Prostate gland (tissue), 2 donors: ENCODE measurements at regions of chr4 and their contacts with region 1.

Region 1: DNA sequence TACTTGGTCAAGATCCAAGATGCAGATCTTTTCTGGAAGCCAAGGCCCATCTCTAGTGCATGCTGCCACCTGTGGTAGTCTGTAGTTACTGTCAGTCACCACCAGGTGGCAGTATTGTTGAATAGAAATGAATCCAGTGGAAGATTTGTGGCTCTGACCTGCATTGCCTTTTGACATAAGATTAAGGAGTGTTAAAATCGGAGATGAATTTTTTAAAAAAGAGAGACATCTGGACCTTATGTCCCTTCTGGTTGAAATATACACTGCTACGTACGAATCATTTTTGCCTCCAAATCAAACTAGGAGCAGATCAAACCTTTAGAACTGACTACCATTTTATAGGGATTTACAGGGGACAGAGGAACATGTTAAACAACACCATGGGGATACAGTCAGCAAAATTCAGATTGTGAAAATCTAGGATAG is 46.9 kb upstream of the RHOH start:
- DNase-seq: peak; percentile 78
- H3K4me3 ChIP-seq: no peak overlapping the region
- H3K27ac ChIP-seq: no peak overlapping the region
- H3K4me1 ChIP-seq: no peaks in the 10 kb centered on the region
- H3K27me3 ChIP-seq: no peaks in the 10 kb centered on the region
- CTCF ChIP-seq: peak; percentile 82 to 98 (median 93)
- POLR2A ChIP-seq: no peak

Region 2: DNA sequence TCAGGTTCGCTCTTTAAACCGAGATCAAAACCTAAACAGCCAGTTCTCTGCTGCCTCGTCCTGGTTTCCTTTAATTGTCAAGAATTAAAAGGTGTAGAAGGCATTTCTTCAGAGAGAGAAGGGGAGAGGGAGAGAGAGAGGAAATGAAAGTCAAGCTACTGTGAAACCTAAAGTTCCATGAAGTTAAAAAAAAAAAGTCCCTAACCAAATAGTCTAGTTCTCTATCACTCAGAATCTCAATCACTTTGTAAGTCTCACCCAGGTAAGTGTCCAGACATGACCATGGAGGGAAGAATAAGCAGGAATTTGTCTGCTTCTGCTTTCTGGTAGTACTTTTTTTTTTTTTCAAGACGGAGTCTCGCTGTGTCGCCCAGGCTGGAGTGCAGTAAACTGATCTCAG is 492.5 kb before region 1 on chr4:
- intact Hi-C with region 1: no loop called
- DNase-seq: no peak
- H3K4me3 ChIP-seq: no peak overlapping the region
- H3K27ac ChIP-seq: no peak overlapping the region
- H3K4me1 ChIP-seq: no peaks in the 10 kb centered on the region
- H3K27me3 ChIP-seq: no peaks in the 10 kb centered on the region
- CTCF ChIP-seq: no peak
- POLR2A ChIP-seq: no peak

Region 3: DNA sequence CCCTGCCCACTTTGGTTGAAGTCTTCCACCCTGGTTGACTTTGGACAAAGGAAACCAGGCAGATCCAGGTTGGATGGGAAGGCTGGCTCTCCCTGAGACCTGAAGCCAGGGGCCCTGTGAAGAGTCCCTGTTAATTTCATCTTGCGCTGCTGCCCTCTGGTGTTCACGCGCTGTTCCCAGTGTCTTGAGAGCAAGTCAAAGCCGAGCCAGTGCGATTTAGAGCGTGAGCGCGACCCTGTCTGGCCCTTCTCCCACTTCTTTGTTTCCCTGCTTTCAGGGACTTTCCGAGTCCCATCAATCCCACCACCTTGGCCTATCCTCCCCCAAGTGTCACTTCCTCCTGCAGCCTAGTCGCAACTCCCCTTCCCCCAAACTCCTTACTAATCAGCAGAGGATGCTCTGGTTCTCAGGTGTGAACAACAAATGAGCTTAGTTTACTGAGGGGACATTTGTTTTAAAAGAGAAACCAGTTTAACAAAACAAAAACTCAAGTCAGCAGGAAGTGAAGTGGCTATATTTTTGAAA is 159.3 kb after region 1 on chr4:
- intact Hi-C with region 1: loop called (anchors 5 kb)
- DNase-seq: peak; percentile 92
- H3K4me3 ChIP-seq: no peak overlapping the region
- H3K27ac ChIP-seq: peak overlapping the region in 1 of 2 donors; percentile 19
- H3K4me1 ChIP-seq: no peaks in the 10 kb centered on the region
- H3K27me3 ChIP-seq: no peaks in the 10 kb centered on the region
- CTCF ChIP-seq: peak; percentile 75 to 92 (median 89)
- POLR2A ChIP-seq: no peak